ENCODE measurements at regions of chr18 and their contacts with region 1.

Region 1: DNA sequence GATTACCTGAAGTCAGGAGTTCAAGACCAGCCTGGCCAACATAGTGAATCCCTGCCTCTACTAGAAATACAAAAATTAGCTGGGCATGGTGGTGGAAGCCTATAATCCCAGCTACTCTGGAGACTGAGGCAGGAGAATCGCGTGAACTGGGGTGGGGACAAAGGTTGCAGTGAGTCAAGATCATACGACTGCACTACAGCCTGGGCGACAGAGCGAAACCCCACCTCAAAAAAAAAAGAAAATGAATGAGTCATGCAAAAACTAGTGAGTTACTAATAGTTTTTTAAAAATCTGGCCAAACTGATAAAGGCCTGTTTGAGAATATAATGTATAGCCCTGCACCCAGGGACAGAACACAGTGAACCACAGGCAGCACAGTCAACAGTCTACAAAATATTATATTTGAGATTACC is 17.5 kb downstream of the AFG3L2 start:
- DNase-seq: no peak
- H3K4me3 ChIP-seq: no peak overlapping the region
- H3K27ac ChIP-seq: no peak overlapping the region
- H3K4me1 ChIP-seq: no peaks in the 10 kb centered on the region
- H3K27me3 ChIP-seq: no peaks in the 10 kb centered on the region
- CTCF ChIP-seq: no peak

Region 2: DNA sequence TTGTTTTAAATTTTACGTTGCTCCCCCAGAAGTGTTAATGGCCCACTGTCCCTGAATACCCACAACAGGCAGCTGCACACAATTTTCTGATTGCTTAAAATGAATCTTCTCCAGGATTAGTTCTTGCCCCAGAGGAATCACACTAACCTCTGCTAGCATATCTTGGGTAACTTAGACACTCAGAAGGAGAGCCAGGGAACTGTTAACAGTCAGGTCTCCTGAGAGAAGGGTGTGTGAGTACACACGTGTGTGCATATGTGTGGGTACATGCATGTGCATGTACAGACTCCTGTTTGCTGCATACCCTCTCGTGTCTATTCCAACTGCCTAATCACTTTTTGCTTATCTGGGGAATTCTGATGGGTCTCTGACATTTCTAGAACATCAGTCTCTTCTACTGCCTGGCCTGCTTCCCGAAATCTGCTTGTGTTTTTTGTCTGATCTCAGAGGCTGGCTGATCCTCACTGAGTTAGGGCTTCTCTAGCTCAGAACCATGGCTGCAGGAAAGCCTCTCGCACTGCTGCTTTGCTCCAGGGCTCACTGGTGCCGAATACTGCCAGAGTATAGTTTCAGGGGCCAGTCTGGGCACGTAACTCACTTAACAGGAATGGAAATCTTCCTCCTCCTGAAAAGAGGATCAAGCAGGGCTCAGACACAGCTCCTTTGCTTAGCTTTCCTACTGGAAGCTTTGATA is 111.0 kb after region 1 on chr18:
- CTCF ChIA-PET with region 1: no interaction called
- POLR2A ChIA-PET with region 1: no interaction called
- intact Hi-C with region 1: no loop called
- DNase-seq: no peak
- H3K4me3 ChIP-seq: no peak overlapping the region
- H3K27ac ChIP-seq: no peak overlapping the region
- H3K4me1 ChIP-seq: no peaks in the 10 kb centered on the region
- H3K27me3 ChIP-seq: no peaks in the 10 kb centered on the region
- CTCF ChIP-seq: no peak

Region 3: DNA sequence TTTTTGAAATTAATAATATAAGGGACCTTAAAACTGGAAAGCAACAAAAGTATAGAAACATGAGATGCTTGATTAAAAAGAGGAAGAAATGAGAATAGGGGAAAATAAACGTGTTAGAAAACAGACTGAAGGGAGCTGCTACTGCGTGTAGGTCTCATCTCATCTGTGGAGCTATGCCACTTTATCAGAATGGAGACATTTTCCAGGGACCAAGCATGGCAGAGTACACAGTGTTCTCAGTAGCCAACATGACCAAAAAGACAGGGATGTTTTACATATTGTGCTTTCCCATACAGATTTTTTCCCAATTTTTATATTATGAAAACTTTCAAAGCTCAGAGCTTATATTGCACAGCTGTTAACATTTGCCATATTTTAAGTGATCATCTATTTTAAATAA is 654.7 kb after region 1 on chr18:
- CTCF ChIA-PET with region 1: no interaction called
- POLR2A ChIA-PET with region 1: interaction called, 13 read pairs
- intact Hi-C with region 1: no loop called
- DNase-seq: no peak
- H3K4me3 ChIP-seq: no peak overlapping the region
- H3K27ac ChIP-seq: no peak overlapping the region
- H3K4me1 ChIP-seq: no peaks in the 10 kb centered on the region
- H3K27me3 ChIP-seq: no peaks in the 10 kb centered on the region
- CTCF ChIP-seq: no peak

Measured in A673 (cell line).